ENCODE measurements at regions of chr4 and their contacts with region 1.

Region 1: DNA sequence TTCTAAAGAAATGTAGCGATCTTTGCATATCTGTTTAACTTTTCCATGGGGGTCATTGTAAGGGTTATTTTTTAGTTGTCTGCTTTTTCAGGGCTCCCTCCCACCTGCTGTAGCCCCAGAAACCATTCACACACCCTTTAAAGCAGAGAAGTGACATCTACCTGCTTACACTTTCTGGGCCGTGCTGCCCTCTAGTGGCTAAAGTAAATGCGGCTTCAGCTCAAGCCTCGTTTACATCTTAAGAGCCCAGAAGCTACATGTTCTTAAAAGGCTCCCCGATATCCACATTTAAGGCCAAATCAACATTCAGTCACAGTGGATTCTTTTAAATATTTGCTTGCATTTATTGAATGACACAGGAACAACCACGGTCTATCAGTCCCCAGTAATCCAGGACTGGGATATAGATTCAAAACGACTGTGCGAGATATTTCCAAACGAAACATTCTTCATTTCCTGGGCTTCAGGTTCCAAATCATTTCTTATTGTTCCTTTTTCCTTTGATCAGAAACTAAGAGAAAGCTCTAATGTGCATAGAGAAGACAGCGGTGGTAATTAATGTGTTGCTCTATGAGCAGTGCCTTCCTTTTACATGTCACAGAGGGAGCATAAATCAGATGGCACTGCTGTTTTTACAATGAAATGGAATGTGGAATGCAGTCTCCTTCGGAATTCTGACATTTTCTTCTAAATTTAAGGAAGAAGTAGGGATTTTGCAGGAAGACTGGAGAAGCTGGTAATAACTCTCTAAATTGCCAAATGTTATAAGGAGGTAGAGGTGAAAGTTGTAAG is 119.9 kb downstream of the RASGEF1B start:
- DNase-seq: peak in 4 of 5 donors; percentile 44 to 71 (median 48)
- ATAC-seq: peak in 3 of 4 donors; percentile 49 to 65 (median 65)
- H3K4me3 ChIP-seq: no peak overlapping the region
- H3K27ac ChIP-seq: no peak overlapping the region
- H3K4me1 ChIP-seq: no peaks in the 10 kb centered on the region
- H3K27me3 ChIP-seq: peaks cover 0 to 4% (median 0%) of the 10 kb centered on the region in 9 donors
- CTCF ChIP-seq: peak; percentile 73 to 94 (median 85)
- POLR2A ChIP-seq: no peak

Region 2: GRCh38 chr4:81069706-81070331 is 282.0 kb before region 1 on chr4:
- intact Hi-C with region 1: loop called (anchors 1 to 5 kb)
- DNase-seq: peak; percentile 20 to 50 (median 32)
- ATAC-seq: peak; percentile 58 to 81 (median 75)
- H3K4me3 ChIP-seq: no peak overlapping the region
- H3K27ac ChIP-seq: no peak overlapping the region
- H3K4me1 ChIP-seq: no peaks in the 10 kb centered on the region
- H3K27me3 ChIP-seq: peaks cover 0 to 3% (median 0%) of the 10 kb centered on the region in 9 donors
- CTCF ChIP-seq: peak; percentile 72 to 93 (median 84)
- POLR2A ChIP-seq: no peak

Region 3: DNA sequence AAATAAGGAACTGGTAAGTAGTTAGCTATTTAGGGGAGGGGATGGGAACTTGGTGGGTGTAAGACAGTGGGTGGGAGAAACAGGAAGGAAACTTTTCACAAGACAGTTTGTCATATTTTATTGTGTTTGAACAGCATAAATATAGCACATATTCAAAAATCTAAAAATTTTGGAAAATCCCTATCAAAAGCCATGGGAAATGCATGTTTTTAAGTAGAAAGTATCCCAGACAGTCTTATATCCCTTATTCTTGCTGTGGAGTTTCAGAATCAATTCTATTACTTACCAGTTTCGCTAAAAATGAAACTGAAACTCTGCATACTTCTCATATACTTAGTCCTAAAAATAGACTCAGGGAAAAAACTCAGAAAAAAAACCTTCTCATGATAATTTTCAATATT is 142.2 kb after region 1 on chr4:
- intact Hi-C with region 1: no loop called
- DNase-seq: no peak
- ATAC-seq: peak in 1 of 4 donors; percentile 41
- H3K4me3 ChIP-seq: peak overlapping the region in 9 of 12 donors; percentile 18 to 45 (median 28)
- H3K27ac ChIP-seq: peak overlapping the region in 10 of 12 donors; percentile 1 to 76 (median 45)
- H3K4me1 ChIP-seq: peaks cover 0 to 55% (median 0%) of the 10 kb centered on the region in 12 donors
- H3K27me3 ChIP-seq: no peaks in the 10 kb centered on the region
- CTCF ChIP-seq: no peak
- POLR2A ChIP-seq: no peak

Measured in heart left ventricle (tissue), 16 donors.